Activated CD8-positive, alpha-beta T cell treated with anti-CD3 and anti-CD28 coated beads, Interleukin-2, amount 10 ng/mL, durations not matched to agents 7 days and 5 days (primary cell): ENCODE measurements at regions of chr7 and their contacts with region 1.

Region 1: DNA sequence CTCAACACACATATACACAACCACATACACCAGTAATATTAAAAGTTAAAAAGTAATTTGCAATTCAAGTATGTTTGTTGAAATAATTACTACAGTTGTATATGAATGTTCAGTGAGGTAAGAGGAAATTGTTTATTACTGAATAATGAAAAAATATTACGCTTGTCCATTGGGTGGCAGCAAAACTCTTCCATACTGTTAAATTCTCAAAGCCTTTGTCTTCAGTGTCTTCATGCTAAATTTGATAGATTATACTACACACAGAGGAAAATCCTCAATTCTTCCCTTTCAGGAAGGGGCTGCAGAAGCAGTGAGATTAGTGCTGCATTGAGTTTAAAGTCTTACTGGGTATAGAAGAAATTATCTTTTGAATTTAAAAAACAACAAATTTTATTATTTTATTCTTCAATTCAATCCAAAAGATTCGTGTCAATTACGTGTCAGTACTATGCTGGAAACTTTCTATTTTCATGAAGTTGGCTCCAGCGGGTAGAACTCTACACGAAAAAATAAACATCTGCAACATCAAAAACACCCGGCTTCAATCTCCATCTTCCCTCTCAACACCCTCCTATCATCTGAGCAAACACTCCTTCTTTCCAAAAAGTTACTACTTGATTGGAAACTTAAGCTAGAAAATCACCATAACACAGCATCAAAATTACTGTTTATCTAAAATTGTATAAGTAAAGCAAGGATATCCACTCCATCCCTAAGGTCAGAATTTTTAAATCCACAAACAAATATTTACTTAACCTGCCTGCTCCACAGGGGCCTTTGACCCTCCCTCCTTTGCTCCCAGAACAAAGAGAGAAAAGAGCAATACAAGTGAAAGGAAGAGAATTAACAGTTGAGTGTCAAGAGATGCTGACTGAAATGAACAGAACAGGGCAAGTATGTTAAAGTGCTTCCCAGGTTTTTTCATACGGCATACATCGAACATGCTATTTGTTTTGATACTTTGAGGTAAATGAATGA is 37.0 kb upstream of the TES start:
- DNase-seq: peak; percentile 60
- ATAC-seq: peak; percentile 65
- H3K4me3 Mint-ChIP-seq: no peak overlapping the region
- H3K27ac Mint-ChIP-seq: no peak overlapping the region
- H3K4me1 Mint-ChIP-seq: peaks cover 24% of the 10 kb centered on the region
- H3K27me3 Mint-ChIP-seq: peaks cover 25% of the 10 kb centered on the region

Region 2: DNA sequence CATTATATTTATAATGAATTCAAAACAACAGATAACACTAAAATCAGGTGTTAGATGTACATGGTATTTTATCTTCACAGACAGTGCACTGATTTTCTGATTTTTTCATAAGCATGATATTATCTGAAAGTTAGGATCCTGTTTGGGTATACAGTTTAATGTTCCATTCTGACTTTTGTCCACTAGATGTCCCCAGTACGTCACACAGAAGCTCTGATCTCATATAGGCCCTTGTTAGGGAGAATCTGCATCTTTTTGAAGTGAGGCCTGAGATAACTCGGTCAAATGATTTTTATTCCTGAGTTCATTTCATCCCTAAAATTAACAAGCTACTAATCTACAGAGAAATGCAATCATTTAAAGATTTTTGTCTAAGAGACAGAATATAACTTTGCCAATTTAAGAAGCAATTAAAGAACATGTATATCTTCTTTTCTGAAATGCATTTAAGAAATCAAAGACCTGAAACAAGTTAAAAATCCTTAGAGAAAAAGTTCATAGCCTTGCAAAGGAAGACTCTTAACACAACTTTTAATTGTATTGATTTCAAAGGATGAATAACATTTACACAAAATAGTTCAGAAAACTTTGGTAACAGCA is 35.0 kb before region 1 on chr7:
- CTCF ChIA-PET with region 1: interaction called, 31 read pairs
- POLR2A ChIA-PET with region 1: no interaction called
- DNase-seq: peak; percentile 64
- ATAC-seq: peak; percentile 92
- H3K4me3 Mint-ChIP-seq: no peak overlapping the region
- H3K27ac Mint-ChIP-seq: no peak overlapping the region
- H3K4me1 Mint-ChIP-seq: peaks cover 34% of the 10 kb centered on the region
- H3K27me3 Mint-ChIP-seq: peaks cover 16% of the 10 kb centered on the region

Region 3: DNA sequence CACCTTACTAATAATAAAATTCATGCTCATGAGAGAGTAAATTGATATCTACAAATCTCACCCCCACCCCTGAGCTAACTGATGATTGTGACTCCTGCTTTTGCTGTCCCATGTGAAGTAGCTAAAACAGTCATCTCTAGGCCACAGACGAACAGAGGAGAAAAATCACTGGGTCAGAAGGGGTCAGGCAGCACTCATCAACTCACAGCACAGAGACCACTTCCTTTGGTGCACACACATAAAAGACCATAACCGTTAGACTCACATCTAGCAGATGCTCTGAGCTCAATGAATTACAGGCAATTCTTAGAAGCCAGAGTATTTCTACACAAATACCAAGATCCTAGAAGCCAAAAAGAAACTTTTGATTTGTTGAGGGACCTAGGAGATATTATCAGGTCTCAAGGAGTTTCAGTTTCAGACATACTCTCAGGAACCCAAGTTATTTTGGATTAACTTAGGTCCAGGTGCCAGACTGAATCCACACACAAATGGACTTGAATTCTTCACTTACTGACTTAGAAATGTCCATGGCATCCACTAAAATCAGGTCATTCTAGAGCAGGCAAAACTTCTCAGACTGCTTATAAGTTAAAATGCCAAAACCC is 28.0 kb before region 1 on chr7:
- CTCF ChIA-PET with region 1: interaction called, 31 read pairs
- POLR2A ChIA-PET with region 1: interaction called, 3 read pairs
- DNase-seq: peak; percentile 80
- ATAC-seq: peak; percentile 98
- H3K4me3 Mint-ChIP-seq: peak overlapping the region; percentile 67
- H3K27ac Mint-ChIP-seq: peak overlapping the region; percentile 94
- H3K4me1 Mint-ChIP-seq: peaks cover 73% of the 10 kb centered on the region
- H3K27me3 Mint-ChIP-seq: peaks cover 3% of the 10 kb centered on the region